IMR-90 (cell line): ENCODE measurements at regions of chr22 and their contacts with region 1.

Region 1: DNA sequence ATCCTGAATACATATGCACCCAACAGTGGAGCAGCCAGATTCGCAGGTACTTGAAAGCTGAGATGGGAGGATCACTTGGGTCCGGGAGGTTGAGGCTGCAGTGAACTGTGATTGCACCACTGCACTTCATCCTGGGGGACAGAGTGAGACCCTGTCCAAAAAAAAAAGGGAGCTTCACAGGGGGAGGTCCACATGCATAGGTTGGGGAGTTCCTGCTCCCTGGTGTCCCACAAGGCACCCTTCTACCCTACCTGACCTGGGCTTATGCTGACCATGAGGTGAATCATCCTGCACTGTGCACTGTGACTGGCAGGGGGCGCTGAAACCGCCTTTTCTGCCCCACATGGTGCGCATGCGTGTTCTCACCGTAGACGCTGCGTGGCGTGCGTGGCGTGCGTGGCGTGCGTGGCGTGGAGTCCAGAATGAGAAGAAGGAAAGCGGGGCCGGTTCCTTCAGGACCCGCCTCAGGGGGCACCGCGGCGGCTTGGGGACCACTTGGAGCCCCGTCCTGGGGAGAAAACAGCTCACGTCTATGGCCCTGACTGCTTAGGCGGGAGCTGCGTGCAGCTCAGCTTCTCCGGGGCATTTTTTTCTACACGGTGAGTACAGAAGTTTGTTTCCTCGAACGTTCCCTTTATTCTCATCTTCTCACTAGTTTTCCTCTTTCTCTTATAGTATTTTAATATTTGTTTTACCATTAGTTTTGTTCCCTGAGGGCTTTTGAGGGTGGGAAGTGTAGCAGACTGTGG is 116.6 kb upstream of the GRK3 start:
- DNase-seq: peak; percentile 78
- ATAC-seq: peak; percentile 93
- H3K4me3 ChIP-seq: peak overlapping the region; percentile 69
- H3K27ac ChIP-seq: peak overlapping the region; percentile 84
- H3K4me1 ChIP-seq: peaks cover 15% of the 10 kb centered on the region
- H3K27me3 ChIP-seq: no peaks in the 10 kb centered on the region
- CTCF ChIP-seq: peak; percentile 99
- POLR2A ChIP-seq: peak; percentile 70; the same call in 1 of the 2 replicates
- RAD21 ChIP-seq: peak; percentile 58

Region 2: DNA sequence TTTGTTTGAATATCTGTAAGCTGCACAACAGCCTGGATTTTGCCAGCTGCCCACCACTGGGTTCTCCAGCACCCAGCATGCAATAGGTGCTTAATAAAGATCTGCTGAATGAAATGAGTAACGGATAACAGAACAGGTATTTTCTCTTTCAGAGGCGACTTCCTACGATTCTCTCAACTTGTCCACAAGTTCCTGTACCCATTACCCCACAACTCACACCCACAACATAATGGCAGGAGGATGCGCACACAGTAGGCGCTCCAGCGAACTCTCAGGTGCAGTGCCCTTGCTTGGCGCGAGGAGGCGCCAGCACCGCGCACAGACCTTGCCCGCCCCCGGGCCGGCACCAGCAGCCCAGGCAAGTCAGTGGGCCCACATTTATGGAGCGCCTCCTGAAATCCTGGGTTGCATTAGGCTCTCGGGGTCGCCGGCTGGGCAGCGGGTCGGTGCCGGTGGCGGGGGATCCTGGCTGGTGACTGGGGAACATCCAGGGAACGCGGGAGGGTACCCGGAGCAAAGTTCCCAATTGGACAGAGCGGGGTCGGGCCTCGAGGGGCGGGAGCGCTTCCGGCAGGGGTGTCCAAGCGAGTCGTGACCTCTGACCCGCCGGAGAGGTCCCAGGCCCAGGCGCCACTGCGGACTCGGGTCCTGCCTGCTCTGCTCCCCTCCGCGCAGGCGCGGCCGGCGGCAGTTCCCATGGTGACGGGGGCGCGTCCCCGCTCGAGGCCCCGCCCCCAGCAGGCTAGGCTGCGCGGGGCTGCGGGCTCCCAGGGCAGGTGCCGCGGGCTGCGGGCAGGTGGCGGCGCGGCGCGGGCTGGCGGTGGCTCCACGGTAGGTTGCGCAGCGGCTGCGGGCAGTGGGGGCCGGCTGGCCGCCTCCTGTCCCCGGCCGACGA is 495.7 kb before region 1 on chr22 and contains the start of gene KIAA1671:
- CTCF ChIA-PET with region 1: no interaction called
- POLR2A ChIA-PET with region 1: no interaction called
- dilution Hi-C with region 1: no loop called
- in situ Hi-C with region 1: no loop called
- intact Hi-C with region 1: no loop called
- DNase-seq: peak; percentile 27
- ATAC-seq: peak; percentile 99
- H3K4me3 ChIP-seq: peak within 1 kb of the TSS; percentile 39
- H3K27ac ChIP-seq: no peak within 1 kb of the TSS
- H3K4me1 ChIP-seq: no peaks in the 10 kb centered on the region
- H3K27me3 ChIP-seq: peaks cover 21% of the 10 kb centered on the region
- CTCF ChIP-seq: peak; percentile 56
- POLR2A ChIP-seq: no peak
- RAD21 ChIP-seq: peak; percentile 50
- total RNA-seq, gene KIAA1671: under 0.01 TPM in 1 of 2 replicates, not detected in the other

Region 3: GRCh38 chr22:25362215-25362882 is 85.5 kb before region 1 on chr22:
- CTCF ChIA-PET with region 1: interaction called, 4 read pairs
- POLR2A ChIA-PET with region 1: no interaction called
- dilution Hi-C with region 1: no loop called
- in situ Hi-C with region 1: no loop called
- intact Hi-C with region 1: loop called (anchors 1 kb)
- DNase-seq: peak; percentile 38
- ATAC-seq: peak; percentile 84
- H3K4me3 ChIP-seq: no peak overlapping the region
- H3K27ac ChIP-seq: no peak overlapping the region
- H3K4me1 ChIP-seq: peaks cover 9% of the 10 kb centered on the region; the same call in 1 of the 2 replicates
- H3K27me3 ChIP-seq: no peaks in the 10 kb centered on the region
- CTCF ChIP-seq: peak; percentile 88
- POLR2A ChIP-seq: no peak
- RAD21 ChIP-seq: peak; percentile 87

Region 4: DNA sequence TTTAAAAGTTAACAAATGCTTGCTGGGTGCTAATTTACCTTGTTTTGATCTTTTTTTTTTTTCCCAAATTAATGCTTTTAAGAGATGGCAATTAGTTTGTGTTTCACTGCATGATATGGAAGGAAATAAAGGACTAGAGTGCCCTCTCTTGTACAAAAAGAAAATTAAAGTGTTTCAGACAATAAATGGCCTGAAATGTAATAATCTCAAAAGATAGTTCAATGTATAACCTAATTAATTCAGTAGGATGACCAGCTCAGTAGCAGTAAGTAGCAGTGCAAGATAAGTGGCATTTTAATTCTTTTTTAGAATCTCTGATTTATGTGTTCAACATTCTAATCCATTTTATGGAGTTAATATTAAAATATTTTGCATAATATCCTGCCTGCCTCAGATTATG is 254.2 kb after region 1 on chr22:
- CTCF ChIA-PET with region 1: no interaction called
- POLR2A ChIA-PET with region 1: no interaction called
- dilution Hi-C with region 1: no loop called
- in situ Hi-C with region 1: no loop called
- intact Hi-C with region 1: loop called (anchors 5 kb)
- DNase-seq: peak; percentile 29
- ATAC-seq: peak; percentile 56; the same call in 1 of the 2 replicates
- H3K4me3 ChIP-seq: no peak overlapping the region
- H3K27ac ChIP-seq: no peak overlapping the region
- H3K4me1 ChIP-seq: no peaks in the 10 kb centered on the region
- H3K27me3 ChIP-seq: no peaks in the 10 kb centered on the region
- CTCF ChIP-seq: peak; percentile 62
- POLR2A ChIP-seq: no peak
- RAD21 ChIP-seq: peak; percentile 68

Region 5: GRCh38 chr22:25777870-25778269 is 330.0 kb after region 1 on chr22:
- CTCF ChIA-PET with region 1: interaction called, 5 read pairs
- POLR2A ChIA-PET with region 1: no interaction called
- dilution Hi-C with region 1: no loop called
- in situ Hi-C with region 1: loop called (anchors 5 kb)
- intact Hi-C with region 1: loop called (anchors 2 kb)
- DNase-seq: peak; percentile 45
- ATAC-seq: peak; percentile 64
- H3K4me3 ChIP-seq: no peak overlapping the region
- H3K27ac ChIP-seq: no peak overlapping the region
- H3K4me1 ChIP-seq: no peaks in the 10 kb centered on the region
- H3K27me3 ChIP-seq: peaks cover 2% of the 10 kb centered on the region; the same call in 1 of the 2 replicates
- CTCF ChIP-seq: peak; percentile 38
- POLR2A ChIP-seq: no peak
- RAD21 ChIP-seq: peak; percentile 40; the same call in 1 of the 2 replicates